CD8-positive, alpha-beta T cell (primary cell): ENCODE measurements at regions of chr17 and their contacts with region 1.

Region 1: GRCh38 chr17:80082403-80083135 is 18.8 kb upstream of the GAA start:
- DNase-seq: peak; percentile 24 to 80 (median 60)
- ATAC-seq: peak; percentile 66
- H3K4me3 ChIP-seq: no peak overlapping the region
- H3K4me3 Mint-ChIP-seq: no peak overlapping the region
- H3K27ac ChIP-seq: no peak overlapping the region
- H3K27ac Mint-ChIP-seq: no peak overlapping the region
- H3K4me1 ChIP-seq: peaks cover 7% of the 10 kb centered on the region
- H3K4me1 Mint-ChIP-seq: peaks cover 2% of the 10 kb centered on the region
- H3K27me3 ChIP-seq: no peaks in the 10 kb centered on the region
- H3K27me3 Mint-ChIP-seq: peaks cover 8% of the 10 kb centered on the region
- CTCF ChIP-seq: peak; percentile 82

Region 2: GRCh38 chr17:80008383-80008840 is 74.2 kb before region 1 on chr17:
- CTCF ChIA-PET with region 1: interaction called, 10 read pairs
- POLR2A ChIA-PET with region 1: no interaction called
- intact Hi-C with region 1: no loop called
- DNase-seq: peak; percentile 48 to 82 (median 73)
- ATAC-seq: peak; percentile 82
- H3K4me3 ChIP-seq: no peak overlapping the region
- H3K4me3 Mint-ChIP-seq: no peak overlapping the region
- H3K27ac ChIP-seq: no peak overlapping the region
- H3K27ac Mint-ChIP-seq: no peak overlapping the region
- H3K4me1 ChIP-seq: peaks cover 11% of the 10 kb centered on the region
- H3K4me1 Mint-ChIP-seq: peaks cover 11% of the 10 kb centered on the region
- H3K27me3 ChIP-seq: no peaks in the 10 kb centered on the region
- H3K27me3 Mint-ChIP-seq: no peaks in the 10 kb centered on the region
- CTCF ChIP-seq: peak; percentile 90

Region 3: GRCh38 chr17:80045703-80046102 is 36.9 kb before region 1 on chr17:
- CTCF ChIA-PET with region 1: no interaction called
- POLR2A ChIA-PET with region 1: no interaction called
- intact Hi-C with region 1: no loop called
- DNase-seq: no peak
- ATAC-seq: no peak
- H3K4me3 ChIP-seq: no peak overlapping the region
- H3K4me3 Mint-ChIP-seq: no peak overlapping the region
- H3K27ac ChIP-seq: no peak overlapping the region
- H3K27ac Mint-ChIP-seq: no peak overlapping the region
- H3K4me1 ChIP-seq: no peaks in the 10 kb centered on the region
- H3K4me1 Mint-ChIP-seq: no peaks in the 10 kb centered on the region
- H3K27me3 ChIP-seq: no peaks in the 10 kb centered on the region
- H3K27me3 Mint-ChIP-seq: no peaks in the 10 kb centered on the region
- CTCF ChIP-seq: no peak

Region 4: GRCh38 chr17:80101011-80101945 is 18.7 kb after region 1 on chr17 and contains the start of gene GAA:
- CTCF ChIA-PET with region 1: interaction called, 8 read pairs
- POLR2A ChIA-PET with region 1: interaction called, 4 read pairs
- intact Hi-C with region 1: loop called (anchors 1 to 2 kb)
- DNase-seq: peak; percentile 77 to 95 (median 87)
- ATAC-seq: peak; percentile 90
- H3K4me3 ChIP-seq: peak within 1 kb of the TSS; percentile 91 to 92
- H3K4me3 Mint-ChIP-seq: peak within 1 kb of the TSS; percentile 88
- H3K27ac ChIP-seq: peak within 1 kb of the TSS; percentile 61 to 69
- H3K27ac Mint-ChIP-seq: peak within 1 kb of the TSS; percentile 74
- H3K4me1 ChIP-seq: peaks cover 23% of the 10 kb centered on the region
- H3K4me1 Mint-ChIP-seq: peaks cover 32% of the 10 kb centered on the region
- H3K27me3 ChIP-seq: no peaks in the 10 kb centered on the region
- H3K27me3 Mint-ChIP-seq: peaks cover 2% of the 10 kb centered on the region
- CTCF ChIP-seq: peak; percentile 69
- total RNA-seq, gene GAA: 21.3 to 22.6 TPM

Region 5: DNA sequence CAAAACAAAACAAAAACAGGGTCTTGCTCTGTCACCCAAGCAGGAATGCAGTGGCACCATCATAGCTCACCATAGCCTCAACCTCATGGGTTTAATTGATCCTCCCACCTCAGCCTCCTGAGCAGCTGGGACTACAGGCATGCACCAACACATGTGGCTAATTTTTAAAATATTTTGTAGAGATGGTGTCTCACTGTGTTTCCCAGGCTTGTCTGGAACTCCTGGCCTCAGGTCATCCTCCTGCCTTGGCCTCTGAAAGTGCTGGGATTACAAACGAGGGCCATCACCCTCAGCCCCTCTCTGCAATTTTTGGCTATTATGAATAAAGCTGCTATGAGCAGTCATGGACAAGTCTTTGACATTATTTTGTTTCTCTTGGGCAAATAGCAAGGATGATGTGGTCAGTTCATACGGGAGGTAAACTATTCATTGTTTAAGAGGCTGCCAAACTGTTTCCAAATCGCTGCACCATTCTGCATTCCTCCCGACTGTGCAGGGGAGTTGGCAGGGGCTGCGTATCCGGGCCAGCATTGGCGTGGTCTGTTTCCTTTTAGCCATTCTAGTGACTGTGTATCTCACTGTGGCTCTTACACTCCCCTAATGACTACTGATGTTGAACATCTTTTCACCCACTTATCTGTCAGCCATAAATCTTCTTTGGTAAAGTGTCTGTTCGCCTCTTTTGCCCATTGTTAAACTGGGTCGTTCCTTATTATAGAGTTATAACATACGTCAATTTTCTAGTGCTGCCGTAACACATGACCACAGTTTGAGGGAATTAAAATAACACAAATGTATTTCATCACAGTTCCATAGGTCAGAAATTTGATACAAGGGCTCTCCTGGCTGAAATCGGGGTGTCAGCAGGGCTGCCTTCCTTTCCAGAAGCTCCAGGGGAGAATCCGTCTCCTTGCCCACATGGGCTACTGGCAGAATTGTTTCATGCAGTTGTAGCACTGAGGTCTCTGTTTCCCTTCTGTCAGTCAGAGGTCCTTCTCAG is 43.4 kb after region 1 on chr17:
- CTCF ChIA-PET with region 1: no interaction called
- POLR2A ChIA-PET with region 1: no interaction called
- intact Hi-C with region 1: loop called in 1 of 2 experiments (anchors 5 kb)
- DNase-seq: no peak
- ATAC-seq: no peak
- H3K4me3 ChIP-seq: no peak overlapping the region
- H3K4me3 Mint-ChIP-seq: no peak overlapping the region
- H3K27ac ChIP-seq: no peak overlapping the region
- H3K27ac Mint-ChIP-seq: no peak overlapping the region
- H3K4me1 ChIP-seq: no peaks in the 10 kb centered on the region
- H3K4me1 Mint-ChIP-seq: no peaks in the 10 kb centered on the region
- H3K27me3 ChIP-seq: peaks cover 0 to 2% of the 10 kb centered on the region in 2 experiments
- H3K27me3 Mint-ChIP-seq: peaks cover 14% of the 10 kb centered on the region
- CTCF ChIP-seq: no peak

Region 6: DNA sequence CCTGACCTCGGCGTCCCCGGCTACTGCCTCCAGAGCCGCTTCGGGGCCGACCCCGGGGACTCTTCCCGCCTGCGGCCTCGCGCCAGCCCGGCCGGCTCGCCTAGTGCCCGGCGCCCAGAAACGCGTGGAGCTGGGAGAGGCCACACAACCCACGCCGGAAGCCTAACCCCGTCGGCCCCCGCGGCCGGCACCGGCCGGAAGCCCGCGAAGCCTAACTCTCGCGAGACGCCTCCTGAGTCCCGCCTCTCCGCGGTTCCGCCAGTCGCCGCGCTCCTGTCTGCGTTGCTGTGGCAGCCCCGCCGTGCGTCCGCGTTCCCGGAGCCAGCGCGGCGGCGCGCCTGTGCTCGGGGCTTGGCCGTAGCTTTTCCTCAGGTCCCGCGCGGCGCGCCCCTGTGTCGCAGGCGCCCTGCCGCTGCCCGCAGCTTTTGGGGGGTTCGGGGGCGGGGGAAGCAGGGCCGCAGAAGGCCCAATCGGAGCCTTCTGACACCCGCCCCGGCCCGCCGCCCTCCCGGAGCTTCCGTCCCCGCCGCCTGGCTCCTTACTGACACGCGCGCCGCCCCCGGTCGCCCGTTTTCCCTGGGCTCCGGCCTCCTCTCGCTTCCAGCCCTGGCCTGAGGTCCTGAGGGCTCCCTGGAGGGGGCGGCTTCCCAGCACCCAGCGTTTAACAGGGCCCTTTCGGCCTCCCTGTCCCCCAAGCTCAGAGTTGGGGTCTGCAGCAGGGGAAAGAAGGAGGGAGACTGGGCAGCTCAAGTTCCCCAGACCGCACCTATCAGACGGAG is 372.2 kb after region 1 on chr17:
- CTCF ChIA-PET with region 1: no interaction called
- POLR2A ChIA-PET with region 1: no interaction called
- intact Hi-C with region 1: no loop called
- DNase-seq: peak; percentile 89 to 98 (median 95)
- ATAC-seq: peak; percentile 92
- H3K4me3 ChIP-seq: peak overlapping the region; percentile 82 to 92
- H3K4me3 Mint-ChIP-seq: peak overlapping the region; percentile 89
- H3K27ac ChIP-seq: peak overlapping the region; percentile 90 to 91
- H3K27ac Mint-ChIP-seq: peak overlapping the region; percentile 94
- H3K4me1 ChIP-seq: peaks cover 8% of the 10 kb centered on the region
- H3K4me1 Mint-ChIP-seq: peaks cover 16% of the 10 kb centered on the region
- H3K27me3 ChIP-seq: peaks cover 0 to 2% of the 10 kb centered on the region in 2 experiments
- H3K27me3 Mint-ChIP-seq: peaks cover 18% of the 10 kb centered on the region
- CTCF ChIP-seq: no peak

Region 7: GRCh38 chr17:80981062-80981902 is 898.7 kb after region 1 on chr17:
- CTCF ChIA-PET with region 1: no interaction called
- POLR2A ChIA-PET with region 1: no interaction called
- intact Hi-C with region 1: loop called in 1 of 2 experiments (anchors 5 kb)
- DNase-seq: peak in 6 of 9 experiments; percentile 25 to 66 (median 56)
- ATAC-seq: peak; percentile 74
- H3K4me3 ChIP-seq: no peak overlapping the region
- H3K4me3 Mint-ChIP-seq: no peak overlapping the region
- H3K27ac ChIP-seq: no peak overlapping the region
- H3K27ac Mint-ChIP-seq: no peak overlapping the region
- H3K4me1 ChIP-seq: peaks cover 6% of the 10 kb centered on the region
- H3K4me1 Mint-ChIP-seq: peaks cover 7% of the 10 kb centered on the region
- H3K27me3 ChIP-seq: peaks cover 2 to 5% of the 10 kb centered on the region in 2 experiments
- H3K27me3 Mint-ChIP-seq: peaks cover 23% of the 10 kb centered on the region
- CTCF ChIP-seq: peak; percentile 88